Mammary epithelial cell (primary cell): ENCODE measurements at regions of chr6 and their contacts with region 1.

Region 1: GRCh38 chr6:28542440-28543296 is 17.0 kb downstream of the GPX5 start:
- DNase-seq: peak; percentile 95
- H3K4me3 ChIP-seq: peak overlapping the region; percentile 36 to 67 (median 42)
- H3K27ac ChIP-seq: no peak overlapping the region
- H3K4me1 ChIP-seq: peaks cover 12% of the 10 kb centered on the region
- H3K27me3 ChIP-seq: no peaks in the 10 kb centered on the region
- CTCF ChIP-seq: peak; percentile 59 to 63

Region 2: DNA sequence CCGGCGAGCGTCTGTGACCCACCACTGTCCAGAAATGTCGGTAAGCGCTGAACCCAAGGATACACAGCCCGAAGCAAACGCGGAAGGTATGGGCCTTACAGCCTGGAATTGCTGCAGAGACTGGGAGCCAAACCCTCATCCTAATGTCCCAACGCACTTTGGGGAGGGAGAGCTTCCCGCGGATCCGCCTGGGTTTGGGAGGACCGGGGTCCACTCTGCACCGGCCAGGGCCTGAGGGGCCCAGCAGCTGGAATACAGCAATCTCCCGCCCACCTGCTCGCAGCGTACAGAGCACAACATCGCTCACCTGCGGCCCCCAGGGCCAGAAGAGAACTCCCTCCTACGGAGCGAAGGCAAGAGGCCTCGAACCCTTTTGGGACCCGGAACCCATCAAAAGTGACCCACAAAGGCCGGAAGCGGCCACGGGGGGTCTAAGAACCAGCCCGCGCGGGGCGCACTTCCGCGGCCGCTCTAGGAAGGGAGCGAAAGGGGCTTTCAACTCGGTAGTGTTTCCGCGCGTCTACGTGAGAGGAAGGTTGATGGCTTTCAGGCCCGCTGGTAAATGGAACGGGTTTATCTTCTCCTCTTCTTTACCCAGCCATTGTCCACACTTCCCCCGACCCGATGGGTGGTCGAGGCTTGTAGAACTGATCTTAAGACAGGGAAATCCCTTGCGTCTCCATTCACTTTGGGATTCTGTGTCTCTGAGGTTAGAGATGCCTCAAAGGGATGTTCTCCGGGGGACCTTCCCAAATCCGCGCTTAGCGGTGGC is 143.1 kb before region 1 on chr6 and contains the start of gene ZSCAN12:
- CTCF ChIA-PET with region 1: no interaction called
- dilution Hi-C with region 1: no loop called
- in situ Hi-C with region 1: no loop called
- intact Hi-C with region 1: loop called (anchors 5 kb)
- DNase-seq: peak; percentile 79
- H3K4me3 ChIP-seq: peak within 1 kb of the TSS; percentile 76 to 91 (median 78)
- H3K27ac ChIP-seq: peak within 1 kb of the TSS; percentile 84
- H3K4me1 ChIP-seq: peaks cover 27% of the 10 kb centered on the region
- H3K27me3 ChIP-seq: no peaks in the 10 kb centered on the region
- CTCF ChIP-seq: peak; percentile 43 to 75
- total RNA-seq, gene ZSCAN12: 5.3 to 8.5 TPM

Region 3: GRCh38 chr6:28496099-28496779 is 46.4 kb before region 1 on chr6:
- CTCF ChIA-PET with region 1: interaction called, 11 read pairs
- dilution Hi-C with region 1: no loop called
- in situ Hi-C with region 1: no loop called
- intact Hi-C with region 1: no loop called
- DNase-seq: no peak
- H3K4me3 ChIP-seq: no peak overlapping the region
- H3K27ac ChIP-seq: no peak overlapping the region
- H3K4me1 ChIP-seq: no peaks in the 10 kb centered on the region
- H3K27me3 ChIP-seq: no peaks in the 10 kb centered on the region
- CTCF ChIP-seq: peak; percentile 17 to 32

Region 4: GRCh38 chr6:28673800-28674671 is 131.4 kb after region 1 on chr6:
- CTCF ChIA-PET with region 1: no interaction called
- dilution Hi-C with region 1: no loop called
- in situ Hi-C with region 1: no loop called
- intact Hi-C with region 1: loop called (anchors 2 kb)
- DNase-seq: peak; percentile 83
- H3K4me3 ChIP-seq: peak overlapping the region; percentile 40 to 69 (median 66)
- H3K27ac ChIP-seq: no peak overlapping the region
- H3K4me1 ChIP-seq: peaks cover 10% of the 10 kb centered on the region
- H3K27me3 ChIP-seq: no peaks in the 10 kb centered on the region
- CTCF ChIP-seq: no peak

Region 5: GRCh38 chr6:28816909-28817807 is 274.5 kb after region 1 on chr6:
- CTCF ChIA-PET with region 1: no interaction called
- dilution Hi-C with region 1: no loop called
- in situ Hi-C with region 1: no loop called
- intact Hi-C with region 1: loop called (anchors 2 kb)
- DNase-seq: peak; percentile 85
- H3K4me3 ChIP-seq: peak overlapping the region; percentile 22 to 48 (median 35)
- H3K27ac ChIP-seq: no peak overlapping the region
- H3K4me1 ChIP-seq: peaks cover 7% of the 10 kb centered on the region
- H3K27me3 ChIP-seq: no peaks in the 10 kb centered on the region
- CTCF ChIP-seq: no peak